ENCODE measurements at regions of chr5 and their contacts with region 1.

Region 1: DNA sequence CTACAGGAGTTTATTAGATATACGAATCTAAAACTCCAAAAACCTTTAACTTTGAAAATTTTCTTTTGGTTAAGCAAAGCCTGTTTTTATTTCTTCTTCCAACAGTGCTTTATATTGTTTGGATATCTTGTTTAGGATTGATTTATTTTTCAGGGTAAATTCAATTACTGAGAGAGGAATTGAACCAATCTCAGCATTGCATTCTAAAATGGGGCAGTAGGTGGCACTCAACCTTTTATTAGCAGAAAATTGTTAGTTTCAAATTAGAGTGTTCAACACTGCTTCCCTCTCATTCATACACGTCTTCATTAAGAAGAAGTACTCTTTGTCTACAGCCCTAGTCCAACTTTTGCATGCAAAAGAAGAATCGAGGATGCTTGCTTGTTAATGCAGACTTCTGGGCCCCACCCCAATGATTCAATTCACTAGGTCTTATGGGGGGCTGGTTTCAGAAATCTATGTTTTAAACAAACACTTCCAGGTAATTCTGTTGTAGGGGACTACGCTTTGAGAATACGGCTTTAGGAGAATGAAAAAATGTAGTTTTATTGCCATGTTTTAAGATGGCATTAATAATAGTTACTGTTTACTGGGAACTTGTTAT is 26.6 kb downstream of the MRPL22 start:
- DNase-seq: peak in 1 of 2 experiments; percentile 17
- H3K4me3 ChIP-seq: no peak overlapping the region
- H3K4me3 Mint-ChIP-seq: no peak overlapping the region
- H3K27ac Mint-ChIP-seq: no peak overlapping the region
- H3K4me1 ChIP-seq: no peaks in the 10 kb centered on the region
- H3K4me1 Mint-ChIP-seq: no peaks in the 10 kb centered on the region
- H3K27me3 ChIP-seq: no peaks in the 10 kb centered on the region
- H3K27me3 Mint-ChIP-seq: no peaks in the 10 kb centered on the region
- CTCF ChIP-seq: peak; percentile 53 to 63

Region 2: DNA sequence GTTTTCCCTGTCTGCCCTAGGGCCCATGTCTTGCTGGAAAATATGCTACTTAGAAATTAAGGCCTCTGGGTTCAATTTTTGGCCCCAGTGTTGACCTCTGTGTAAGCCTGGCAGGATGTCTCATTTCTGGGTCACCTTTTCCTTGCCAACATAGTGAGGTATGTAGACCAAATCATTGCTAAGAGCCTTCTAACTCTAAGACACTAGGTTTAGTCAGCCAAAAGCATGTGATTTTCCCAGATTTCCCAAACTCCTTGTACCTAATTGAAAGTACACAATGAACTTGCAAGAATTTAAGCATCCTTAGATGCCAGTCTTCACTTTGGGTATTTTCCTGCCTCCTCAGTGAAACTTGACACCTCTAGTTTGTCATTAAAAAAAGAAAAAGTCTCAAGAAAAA is 700.0 kb before region 1 on chr5:
- CTCF ChIA-PET with region 1: no interaction called
- POLR2A ChIA-PET with region 1: no interaction called
- intact Hi-C with region 1: no loop called
- DNase-seq: no peak
- H3K4me3 ChIP-seq: no peak overlapping the region
- H3K4me3 Mint-ChIP-seq: no peak overlapping the region
- H3K27ac Mint-ChIP-seq: no peak overlapping the region
- H3K4me1 ChIP-seq: peaks cover 12% of the 10 kb centered on the region
- H3K4me1 Mint-ChIP-seq: peaks cover under 1% of the 10 kb centered on the region
- H3K27me3 ChIP-seq: no peaks in the 10 kb centered on the region
- H3K27me3 Mint-ChIP-seq: no peaks in the 10 kb centered on the region
- CTCF ChIP-seq: no peak

Region 3: GRCh38 chr5:155049569-155050383 is 82.3 kb after region 1 on chr5:
- CTCF ChIA-PET with region 1: no interaction called
- POLR2A ChIA-PET with region 1: no interaction called
- intact Hi-C with region 1: no loop called
- DNase-seq: peak in 1 of 2 experiments; percentile 38
- H3K4me3 ChIP-seq: no peak overlapping the region
- H3K4me3 Mint-ChIP-seq: no peak overlapping the region
- H3K27ac Mint-ChIP-seq: no peak overlapping the region
- H3K4me1 ChIP-seq: peaks cover 21% of the 10 kb centered on the region
- H3K4me1 Mint-ChIP-seq: peaks cover 19% of the 10 kb centered on the region
- H3K27me3 ChIP-seq: peaks cover 1% of the 10 kb centered on the region; the same call in 1 of the 2 replicates
- H3K27me3 Mint-ChIP-seq: no peaks in the 10 kb centered on the region
- CTCF ChIP-seq: peak in 1 of 2 experiments; percentile 31

Region 4: DNA sequence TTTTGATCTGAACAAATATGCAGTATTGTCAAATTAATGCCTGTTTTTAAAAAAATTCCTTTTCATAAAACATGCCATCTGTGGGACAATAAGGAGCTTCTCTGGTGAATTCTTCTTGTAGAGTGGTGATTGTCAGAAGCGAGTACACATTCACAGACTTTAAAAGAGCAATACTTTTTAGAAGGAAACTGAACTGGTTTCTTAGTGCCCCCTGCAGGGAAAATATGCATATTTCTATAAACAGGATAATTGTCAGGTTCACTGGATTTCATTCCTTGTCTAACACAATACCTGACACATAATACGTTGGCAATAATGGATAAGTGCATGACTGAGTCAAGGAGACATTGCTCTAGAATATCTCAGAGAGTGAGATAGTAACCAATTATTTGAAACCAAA is 179.7 kb after region 1 on chr5:
- CTCF ChIA-PET with region 1: no interaction called
- POLR2A ChIA-PET with region 1: no interaction called
- intact Hi-C with region 1: loop called (anchors 1 kb)
- DNase-seq: no peak
- H3K4me3 ChIP-seq: no peak overlapping the region
- H3K4me3 Mint-ChIP-seq: no peak overlapping the region
- H3K27ac Mint-ChIP-seq: no peak overlapping the region
- H3K4me1 ChIP-seq: no peaks in the 10 kb centered on the region
- H3K4me1 Mint-ChIP-seq: no peaks in the 10 kb centered on the region
- H3K27me3 ChIP-seq: 0 out of 2 replicates have a peak, but pooled peaks cover 2% of the 10 kb centered on the region
- H3K27me3 Mint-ChIP-seq: peaks cover 10% of the 10 kb centered on the region
- CTCF ChIP-seq: peak; percentile 25 to 37

Region 5: DNA sequence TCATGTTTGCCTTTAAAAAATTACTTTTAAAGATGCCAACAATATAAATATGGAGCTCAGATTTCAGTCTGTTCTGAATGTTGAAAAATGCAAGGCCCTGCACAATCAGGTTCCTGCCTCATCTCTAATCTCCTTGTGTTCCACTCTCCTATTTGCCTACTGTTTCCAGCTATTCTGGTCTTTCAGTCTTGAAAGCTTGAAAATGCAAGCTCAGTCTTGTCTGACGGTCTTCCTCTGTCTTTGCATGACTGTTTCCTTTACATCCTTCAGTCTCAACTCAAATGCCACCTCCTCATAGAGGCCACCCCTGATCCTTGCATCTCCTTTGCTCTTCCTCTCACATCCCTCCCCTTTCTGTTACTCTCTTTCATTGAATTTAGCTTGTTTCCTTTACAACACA is 401.0 kb after region 1 on chr5:
- CTCF ChIA-PET with region 1: no interaction called
- POLR2A ChIA-PET with region 1: no interaction called
- intact Hi-C with region 1: no loop called
- DNase-seq: no peak
- H3K4me3 ChIP-seq: no peak overlapping the region
- H3K4me3 Mint-ChIP-seq: no peak overlapping the region
- H3K27ac Mint-ChIP-seq: no peak overlapping the region
- H3K4me1 ChIP-seq: no peaks in the 10 kb centered on the region
- H3K4me1 Mint-ChIP-seq: no peaks in the 10 kb centered on the region
- H3K27me3 ChIP-seq: no peaks in the 10 kb centered on the region
- H3K27me3 Mint-ChIP-seq: peaks cover 6% of the 10 kb centered on the region
- CTCF ChIP-seq: no peak

Measured in Caco-2 (cell line).